Naive thymus-derived CD4-positive, alpha-beta T cell (primary cell): ENCODE measurements at regions of chr2 and their contacts with region 1.

Region 1: DNA sequence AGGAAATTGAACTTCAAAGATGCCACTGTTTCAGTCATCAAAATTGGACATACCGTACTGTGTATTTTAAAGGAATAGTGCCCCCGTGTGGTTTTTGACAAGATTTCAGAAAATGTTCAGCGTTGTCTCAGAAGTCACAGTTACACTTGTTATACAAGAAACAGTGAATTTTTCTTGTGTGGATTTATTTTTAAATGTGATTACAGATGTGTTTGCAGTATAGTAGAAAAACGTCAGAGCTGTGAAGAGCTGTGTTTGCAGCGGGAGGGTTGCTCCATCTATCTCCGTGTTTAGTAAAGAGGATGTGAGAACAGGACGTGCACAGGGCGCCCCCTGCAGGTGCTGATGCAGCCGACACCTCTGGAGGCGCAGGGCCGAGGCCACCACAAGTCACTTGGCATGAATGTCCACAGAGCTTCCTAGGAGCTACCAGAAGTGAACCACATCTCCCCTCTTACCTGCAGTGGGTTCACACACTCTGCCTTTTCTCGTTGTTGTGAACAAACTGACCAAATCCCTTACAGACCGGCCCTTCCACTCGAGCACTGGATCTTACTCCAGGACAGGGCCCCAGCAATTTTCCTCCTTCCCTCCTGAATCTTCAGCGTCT is 73.1 kb downstream of the CACNB4 start:
- DNase-seq: peak; percentile 50 to 81 (median 76)
- ATAC-seq: peak; percentile 94
- H3K4me3 ChIP-seq: peak overlapping the region; percentile 54
- H3K4me3 Mint-ChIP-seq: peak overlapping the region; percentile 3 to 95 (median 82)
- H3K27ac ChIP-seq: no peak overlapping the region
- H3K27ac Mint-ChIP-seq: peak overlapping the region in 4 of 9 donors; percentile 13 to 58 (median 24)
- H3K4me1 ChIP-seq: no peaks in the 10 kb centered on the region
- H3K4me1 Mint-ChIP-seq: peaks cover 0 to 12% (median 10%) of the 10 kb centered on the region in 7 donors
- H3K27me3 ChIP-seq: no peaks in the 10 kb centered on the region
- H3K27me3 Mint-ChIP-seq: peaks cover 0 to 14% (median 0%) of the 10 kb centered on the region in 5 donors

Region 2: GRCh38 chr2:151575338-151575737 is 450.4 kb before region 1 on chr2:
- CTCF ChIA-PET with region 1: no interaction called
- POLR2A ChIA-PET with region 1: no interaction called
- intact Hi-C with region 1: loop called in 1 of 2 experiments (anchors 10 kb)
- DNase-seq: no peak
- ATAC-seq: no peak
- H3K4me3 ChIP-seq: no peak overlapping the region
- H3K4me3 Mint-ChIP-seq: no peak overlapping the region
- H3K27ac ChIP-seq: no peak overlapping the region
- H3K27ac Mint-ChIP-seq: no peak overlapping the region
- H3K4me1 ChIP-seq: no peaks in the 10 kb centered on the region
- H3K4me1 Mint-ChIP-seq: no peaks in the 10 kb centered on the region
- H3K27me3 ChIP-seq: no peaks in the 10 kb centered on the region
- H3K27me3 Mint-ChIP-seq: no peaks in the 10 kb centered on the region

Region 3: GRCh38 chr2:151999053-151999452 is 26.7 kb before region 1 on chr2:
- CTCF ChIA-PET with region 1: interaction called, 14 read pairs
- POLR2A ChIA-PET with region 1: no interaction called
- intact Hi-C with region 1: loop called (anchors 1 kb)
- DNase-seq: peak in 7 of 9 donors; percentile 11 to 38 (median 14)
- ATAC-seq: peak; percentile 77
- H3K4me3 ChIP-seq: no peak overlapping the region
- H3K4me3 Mint-ChIP-seq: no peak overlapping the region
- H3K27ac ChIP-seq: no peak overlapping the region
- H3K27ac Mint-ChIP-seq: no peak overlapping the region
- H3K4me1 ChIP-seq: no peaks in the 10 kb centered on the region
- H3K4me1 Mint-ChIP-seq: peaks cover 0 to under 1% (median 0%) of the 10 kb centered on the region in 7 donors
- H3K27me3 ChIP-seq: no peaks in the 10 kb centered on the region
- H3K27me3 Mint-ChIP-seq: peaks cover 0 to 1% (median 0%) of the 10 kb centered on the region in 5 donors

Region 4: GRCh38 chr2:152012697-152013096 is 13.1 kb before region 1 on chr2:
- CTCF ChIA-PET with region 1: interaction called, 10 read pairs
- POLR2A ChIA-PET with region 1: no interaction called
- intact Hi-C with region 1: no loop called
- DNase-seq: no peak
- ATAC-seq: no peak
- H3K4me3 ChIP-seq: no peak overlapping the region
- H3K4me3 Mint-ChIP-seq: no peak overlapping the region
- H3K27ac ChIP-seq: no peak overlapping the region
- H3K27ac Mint-ChIP-seq: no peak overlapping the region
- H3K4me1 ChIP-seq: no peaks in the 10 kb centered on the region
- H3K4me1 Mint-ChIP-seq: no peaks in the 10 kb centered on the region
- H3K27me3 ChIP-seq: no peaks in the 10 kb centered on the region
- H3K27me3 Mint-ChIP-seq: peaks cover 5 to 13% (median 10%) of the 10 kb centered on the region in 5 donors

Region 5: GRCh38 chr2:152335010-152335725 is 309.4 kb after region 1 on chr2 and contains the start of gene FMNL2:
- CTCF ChIA-PET with region 1: no interaction called
- POLR2A ChIA-PET with region 1: no interaction called
- intact Hi-C with region 1: no loop called
- DNase-seq: peak in 6 of 9 donors; percentile 2 to 74 (median 24)
- ATAC-seq: peak; percentile 77
- H3K4me3 ChIP-seq: peak within 1 kb of the TSS; percentile 24
- H3K4me3 Mint-ChIP-seq: peak within 1 kb of the TSS; percentile 72 to 93 (median 86)
- H3K27ac ChIP-seq: no peak within 1 kb of the TSS
- H3K27ac Mint-ChIP-seq: no peak within 1 kb of the TSS
- H3K4me1 ChIP-seq: no peaks in the 10 kb centered on the region
- H3K4me1 Mint-ChIP-seq: peaks cover 5 to 20% (median 14%) of the 10 kb centered on the region in 7 donors
- H3K27me3 ChIP-seq: peaks cover 0 to 8% of the 10 kb centered on the region in 2 donors
- H3K27me3 Mint-ChIP-seq: peaks cover 55 to 70% (median 59%) of the 10 kb centered on the region in 5 donors
- total RNA-seq, gene FMNL2: 0.66 to 2.7 (median 1.7) TPM